HEK293 (cell line): ENCODE measurements at regions of chr15 and their contacts with region 1.

Region 1: GRCh38 chr15:55917881-55918296 is 75.5 kb downstream of the NEDD4 start:
- H3K4me3 ChIP-seq: no peak overlapping the region
- H3K27ac ChIP-seq: no peak overlapping the region
- H3K4me1 ChIP-seq: peaks cover 10% of the 10 kb centered on the region
- CTCF ChIP-seq: no peak

Region 2: DNA sequence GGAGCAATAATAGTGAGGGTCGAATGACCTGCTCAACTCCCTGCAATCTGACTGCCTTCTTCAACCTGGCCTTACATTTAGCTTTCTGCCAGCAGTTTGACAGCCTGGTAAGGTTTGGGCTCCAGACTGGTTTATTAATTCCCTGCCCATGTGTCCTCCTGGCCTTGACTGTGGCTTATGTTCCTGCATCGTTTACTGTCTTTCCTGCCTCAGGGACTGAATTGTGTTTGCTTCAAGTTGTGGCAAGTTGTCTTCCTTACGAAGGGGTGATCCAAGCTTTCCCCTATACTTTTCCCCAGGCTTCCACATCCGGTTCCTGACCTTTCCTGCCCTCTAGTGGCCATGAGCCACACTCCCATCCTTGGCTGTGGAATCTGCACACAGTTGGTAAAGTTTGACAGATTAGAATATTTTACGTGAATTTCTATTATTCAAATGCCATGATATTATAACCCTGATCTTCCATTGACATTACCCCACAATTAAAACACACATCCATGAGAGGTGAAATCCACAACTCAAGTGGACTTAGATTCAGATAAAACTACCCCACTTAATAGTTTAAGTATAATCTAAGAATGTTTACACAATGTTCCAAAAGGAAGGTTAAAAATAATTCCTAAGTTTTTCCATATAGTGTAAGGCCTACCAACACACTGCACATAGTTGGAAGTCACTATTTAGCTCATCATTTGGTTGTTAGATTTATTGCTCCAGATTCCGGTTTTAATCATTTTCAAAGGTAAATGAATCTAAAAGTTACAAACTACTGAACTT is 20.1 kb before region 1 on chr15:
- CTCF ChIA-PET with region 1: interaction called, 18 read pairs
- POLR2A ChIA-PET with region 1: no interaction called
- H3K4me3 ChIP-seq: no peak overlapping the region
- H3K27ac ChIP-seq: no peak overlapping the region
- H3K4me1 ChIP-seq: peaks cover 12% of the 10 kb centered on the region
- CTCF ChIP-seq: peak; percentile 48; the same call in 1 of the 2 replicates

Region 3: GRCh38 chr15:55907797-55908196 is 10.1 kb before region 1 on chr15:
- CTCF ChIA-PET with region 1: interaction called, 12 read pairs
- POLR2A ChIA-PET with region 1: no interaction called
- H3K4me3 ChIP-seq: no peak overlapping the region
- H3K27ac ChIP-seq: no peak overlapping the region
- H3K4me1 ChIP-seq: no peaks in the 10 kb centered on the region
- CTCF ChIP-seq: no peak